Activated CD4-positive, alpha-beta T cell treated with anti-CD3 and anti-CD28 coated beads for 36 hours (primary cell): ENCODE measurements at regions of chr11 and their contacts with region 1.

Region 1: DNA sequence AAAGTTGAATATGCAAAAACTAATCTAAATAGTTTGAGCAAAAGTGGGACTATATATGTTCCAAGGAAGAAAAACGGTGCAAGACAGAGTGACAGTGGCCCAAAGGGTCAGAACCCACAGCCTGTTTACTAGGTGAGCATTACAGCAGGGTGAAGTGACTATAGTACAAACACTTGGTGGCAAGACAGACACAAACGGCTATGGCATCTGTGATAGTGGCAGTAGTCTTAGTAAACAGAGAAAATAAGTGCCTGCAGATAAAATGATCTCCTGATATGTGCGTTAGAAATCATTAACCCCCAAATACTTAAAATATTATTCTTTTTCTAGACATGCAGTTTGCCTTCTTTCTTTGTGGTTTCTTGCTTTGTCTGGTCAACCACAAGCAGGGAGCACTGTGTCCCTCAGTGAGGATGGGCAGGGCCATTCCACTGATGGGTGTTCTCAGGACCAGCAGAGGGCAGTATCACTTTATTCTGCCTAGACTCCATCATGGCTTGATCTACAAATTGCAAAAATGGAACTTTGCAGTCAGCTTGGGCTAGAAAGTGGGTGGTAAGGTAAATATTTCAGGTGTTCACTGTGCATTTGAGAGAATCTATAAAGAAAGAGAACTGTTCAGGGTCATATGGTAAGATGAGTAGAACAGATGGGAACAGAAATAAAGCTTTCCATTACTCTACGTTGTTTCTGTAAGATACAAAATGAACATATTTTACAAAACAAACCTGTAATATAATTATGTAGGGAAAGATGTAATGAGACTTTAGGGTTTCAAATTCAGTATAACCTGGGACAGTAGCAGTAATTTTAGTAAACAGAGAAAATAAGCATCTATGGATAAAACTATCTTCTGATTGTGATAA is 198.2 kb downstream of the SWAP70 start:
- DNase-seq: peak; percentile 71
- ATAC-seq: peak; percentile 74
- H3K4me3 Mint-ChIP-seq: no peak overlapping the region
- H3K27ac Mint-ChIP-seq: no peak overlapping the region
- H3K4me1 Mint-ChIP-seq: peaks cover 23% of the 10 kb centered on the region
- H3K27me3 Mint-ChIP-seq: no peaks in the 10 kb centered on the region

Region 2: GRCh38 chr11:9972989-9973388 is 110.9 kb after region 1 on chr11:
- CTCF ChIA-PET with region 1: interaction called, 4 read pairs
- POLR2A ChIA-PET with region 1: no interaction called
- intact Hi-C with region 1: loop called (anchors 1 kb)
- DNase-seq: peak; percentile 37
- ATAC-seq: peak; percentile 78
- H3K4me3 Mint-ChIP-seq: no peak overlapping the region
- H3K27ac Mint-ChIP-seq: no peak overlapping the region
- H3K4me1 Mint-ChIP-seq: no peaks in the 10 kb centered on the region
- H3K27me3 Mint-ChIP-seq: no peaks in the 10 kb centered on the region